ENCODE measurements at regions of chr12 and their contacts with region 1.

Region 1: GRCh38 chr12:68189821-68190242 is 30.3 kb upstream of the IFNG start:
- DNase-seq: peak; percentile 78
- H3K4me3 Mint-ChIP-seq: peak overlapping the region; percentile 31
- H3K27ac Mint-ChIP-seq: peak overlapping the region; percentile 77
- H3K4me1 Mint-ChIP-seq: peaks cover 25% of the 10 kb centered on the region
- H3K27me3 Mint-ChIP-seq: no peaks in the 10 kb centered on the region

Region 2: GRCh38 chr12:68137335-68137830 is 52.4 kb before region 1 on chr12:
- intact Hi-C with region 1: no loop called
- DNase-seq: peak; percentile 65
- H3K4me3 Mint-ChIP-seq: peak overlapping the region; percentile 53
- H3K27ac Mint-ChIP-seq: peak overlapping the region; percentile 89
- H3K4me1 Mint-ChIP-seq: peaks cover 65% of the 10 kb centered on the region
- H3K27me3 Mint-ChIP-seq: no peaks in the 10 kb centered on the region

Region 3: GRCh38 chr12:68175557-68176061 is 14.2 kb before region 1 on chr12:
- intact Hi-C with region 1: loop called (anchors 2 kb)
- DNase-seq: peak; percentile 92
- H3K4me3 Mint-ChIP-seq: peak overlapping the region; percentile 68
- H3K27ac Mint-ChIP-seq: peak overlapping the region; percentile 85
- H3K4me1 Mint-ChIP-seq: peaks cover 53% of the 10 kb centered on the region
- H3K27me3 Mint-ChIP-seq: no peaks in the 10 kb centered on the region

Measured in activated CD4-positive, alpha-beta T cell treated with anti-CD3 and anti-CD28 coated beads, Interleukin-2, amount 10 ng/mL, durations not matched to agents 24 days and 14 days (primary cell).